WTC11 (cell line): ENCODE measurements at regions of chr10 and their contacts with region 1.

Region 1: GRCh38 chr10:120011359-120012130 is 119.0 kb downstream of the SEC23IP start:
- DNase-seq: peak; percentile 73
- ATAC-seq: peak; percentile 94
- H3K4me3 Mint-ChIP-seq: no peak overlapping the region
- H3K27ac Mint-ChIP-seq: no peak overlapping the region
- H3K4me1 Mint-ChIP-seq: peaks cover 9% of the 10 kb centered on the region; the same call in 1 of the 2 replicates
- H3K27me3 Mint-ChIP-seq: peaks cover 13% of the 10 kb centered on the region
- CTCF ChIP-seq: no peak

Region 2: GRCh38 chr10:119680050-119680449 is 331.5 kb before region 1 on chr10:
- CTCF ChIA-PET with region 1: no interaction called
- POLR2A ChIA-PET with region 1: no interaction called
- DNase-seq: no peak
- ATAC-seq: no peak
- H3K4me3 Mint-ChIP-seq: no peak overlapping the region
- H3K27ac Mint-ChIP-seq: peak overlapping the region; percentile 74; the same call in 1 of the 2 replicates
- H3K4me1 Mint-ChIP-seq: 0 out of 2 replicates have a peak, but pooled peaks cover 2% of the 10 kb centered on the region
- H3K27me3 Mint-ChIP-seq: no peaks in the 10 kb centered on the region
- CTCF ChIP-seq: no peak

Region 3: GRCh38 chr10:119973261-119973660 is 38.3 kb before region 1 on chr10:
- CTCF ChIA-PET with region 1: no interaction called
- POLR2A ChIA-PET with region 1: no interaction called
- DNase-seq: no peak
- ATAC-seq: peak; percentile 39; the same call in 1 of the 2 replicates
- H3K4me3 Mint-ChIP-seq: no peak overlapping the region
- H3K27ac Mint-ChIP-seq: no peak overlapping the region
- H3K4me1 Mint-ChIP-seq: no peaks in the 10 kb centered on the region
- H3K27me3 Mint-ChIP-seq: no peaks in the 10 kb centered on the region; the same call in 1 of the 2 replicates
- CTCF ChIP-seq: no peak

Region 4: DNA sequence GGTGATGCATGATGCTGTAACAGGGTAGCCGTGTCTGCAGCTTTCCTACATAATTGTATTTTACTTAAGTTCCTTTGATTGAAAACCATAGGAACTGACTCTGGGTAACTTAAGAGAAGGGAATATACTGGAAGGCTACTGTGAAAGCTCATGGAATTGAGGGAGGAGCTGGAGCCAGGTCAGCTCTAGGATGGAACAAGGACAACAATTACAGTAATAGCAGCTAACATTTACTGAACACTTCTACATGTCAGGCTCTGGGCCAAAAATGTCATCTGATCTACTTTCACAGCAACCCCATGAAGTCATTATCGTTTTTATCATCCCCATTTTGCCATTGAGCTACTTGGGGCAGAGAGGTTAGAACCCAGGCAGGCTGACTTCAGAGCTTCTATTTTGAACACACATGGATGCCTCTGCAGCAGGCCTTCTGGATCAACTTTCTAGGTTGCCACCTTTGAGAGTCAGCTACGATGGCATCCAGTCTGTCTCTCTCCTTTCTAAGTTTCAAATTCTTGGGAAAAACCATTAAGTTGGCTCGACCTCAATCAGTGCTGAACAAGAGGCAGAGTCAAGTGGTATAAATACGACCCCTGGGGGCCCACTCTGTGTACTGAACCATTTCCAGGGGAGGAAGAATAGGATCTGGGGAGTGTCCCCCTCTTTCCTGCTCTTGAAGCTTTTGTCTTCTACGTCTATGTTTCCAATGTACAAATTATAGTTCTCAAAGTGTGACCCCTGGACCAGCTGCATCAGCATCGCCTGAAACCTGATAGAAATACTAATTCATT is 173.2 kb after region 1 on chr10:
- CTCF ChIA-PET with region 1: interaction called, 20 read pairs
- POLR2A ChIA-PET with region 1: no interaction called
- DNase-seq: peak; percentile 38
- ATAC-seq: peak; percentile 72
- H3K4me3 Mint-ChIP-seq: no peak overlapping the region
- H3K27ac Mint-ChIP-seq: no peak overlapping the region
- H3K4me1 Mint-ChIP-seq: peaks cover 6% of the 10 kb centered on the region
- H3K27me3 Mint-ChIP-seq: no peaks in the 10 kb centered on the region
- CTCF ChIP-seq: no peak